Endothelial cell of umbilical vein (primary cell): ENCODE measurements at regions of chr2 and their contacts with region 1.

Region 1: GRCh38 chr2:50143822-50144575 is 887.9 kb downstream of the NRXN1 start:
- DNase-seq: peak; percentile 33
- H3K4me3 ChIP-seq: peak overlapping the region in 1 of 3 experiments; percentile 52
- H3K27ac ChIP-seq: no peak overlapping the region
- H3K4me1 ChIP-seq: no peaks in the 10 kb centered on the region
- H3K27me3 ChIP-seq: no peaks in the 10 kb centered on the region
- CTCF ChIP-seq: peak; percentile 27 to 41
- POLR2A ChIP-seq: no peak

Region 2: GRCh38 chr2:48946449-48947048 is 1197.5 kb before region 1 on chr2:
- CTCF ChIA-PET with region 1: interaction called, 3 read pairs
- POLR2A ChIA-PET with region 1: no interaction called
- dilution Hi-C with region 1: no loop called
- intact Hi-C with region 1: loop called (anchors 1 kb)
- DNase-seq: peak; percentile 56
- H3K4me3 ChIP-seq: no peak overlapping the region
- H3K27ac ChIP-seq: no peak overlapping the region
- H3K4me1 ChIP-seq: no peaks in the 10 kb centered on the region
- H3K27me3 ChIP-seq: no peaks in the 10 kb centered on the region
- CTCF ChIP-seq: peak; percentile 58 to 64
- POLR2A ChIP-seq: no peak

Region 3: GRCh38 chr2:49255409-49255971 is 888.5 kb before region 1 on chr2:
- CTCF ChIA-PET with region 1: no interaction called
- POLR2A ChIA-PET with region 1: no interaction called
- dilution Hi-C with region 1: no loop called
- intact Hi-C with region 1: loop called (anchors 5 kb)
- DNase-seq: peak; percentile 6
- H3K4me3 ChIP-seq: no peak overlapping the region
- H3K27ac ChIP-seq: no peak overlapping the region
- H3K4me1 ChIP-seq: no peaks in the 10 kb centered on the region
- H3K27me3 ChIP-seq: no peaks in the 10 kb centered on the region
- CTCF ChIP-seq: no peak
- POLR2A ChIP-seq: no peak

Region 4: DNA sequence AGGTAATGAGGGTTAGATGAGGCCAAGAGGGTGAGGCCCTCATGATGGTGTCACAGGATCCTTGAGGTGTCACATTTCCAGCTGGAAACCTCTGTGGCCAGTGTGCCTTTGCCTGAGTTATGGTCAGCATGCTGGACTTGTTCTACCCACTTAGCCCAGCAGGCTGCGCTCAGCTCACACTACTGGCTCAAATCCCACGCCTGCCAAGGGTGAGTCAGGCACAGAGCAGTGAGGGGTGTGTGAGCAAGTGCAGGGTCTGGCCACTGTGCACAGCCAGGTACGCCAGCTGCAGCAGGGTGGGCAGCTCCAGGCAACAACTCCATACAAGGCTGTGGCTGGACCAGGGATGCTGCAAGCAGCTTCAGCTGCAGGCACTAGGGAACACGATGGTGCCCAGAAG is 373.1 kb before region 1 on chr2:
- CTCF ChIA-PET with region 1: no interaction called
- POLR2A ChIA-PET with region 1: no interaction called
- dilution Hi-C with region 1: no loop called
- intact Hi-C with region 1: loop called (anchors 10 kb)
- DNase-seq: no peak
- H3K4me3 ChIP-seq: no peak overlapping the region
- H3K27ac ChIP-seq: no peak overlapping the region
- H3K4me1 ChIP-seq: no peaks in the 10 kb centered on the region
- H3K27me3 ChIP-seq: no peaks in the 10 kb centered on the region
- CTCF ChIP-seq: peak in 1 of 2 donors; percentile 15
- POLR2A ChIP-seq: no peak

Region 5: GRCh38 chr2:50126845-50127244 is 17.2 kb before region 1 on chr2:
- CTCF ChIA-PET with region 1: no interaction called
- POLR2A ChIA-PET with region 1: no interaction called
- dilution Hi-C with region 1: no loop called
- intact Hi-C with region 1: no loop called
- DNase-seq: no peak
- H3K4me3 ChIP-seq: no peak overlapping the region
- H3K27ac ChIP-seq: no peak overlapping the region
- H3K4me1 ChIP-seq: no peaks in the 10 kb centered on the region
- H3K27me3 ChIP-seq: no peaks in the 10 kb centered on the region
- CTCF ChIP-seq: no peak
- POLR2A ChIP-seq: no peak

Region 6: DNA sequence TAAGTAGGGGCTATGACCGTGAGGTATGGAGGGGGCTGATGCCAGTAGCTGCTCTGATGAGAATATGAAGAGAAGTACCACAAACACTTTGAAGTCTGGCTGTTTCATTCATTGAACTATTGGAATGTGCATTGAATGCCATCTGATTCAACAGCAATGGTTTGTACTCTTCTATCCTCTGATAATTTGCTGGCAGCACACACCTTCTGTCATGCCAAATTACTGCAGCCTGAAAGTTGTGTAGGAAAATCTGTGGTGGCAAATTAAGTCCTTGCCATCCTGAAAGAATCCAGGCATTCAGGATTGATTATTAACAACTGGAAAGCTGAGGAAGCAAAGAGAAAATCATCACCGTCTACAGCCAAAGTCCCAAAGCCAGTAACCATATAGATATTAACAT is 176.7 kb after region 1 on chr2:
- CTCF ChIA-PET with region 1: no interaction called
- POLR2A ChIA-PET with region 1: no interaction called
- dilution Hi-C with region 1: no loop called
- intact Hi-C with region 1: no loop called
- DNase-seq: no peak
- H3K4me3 ChIP-seq: no peak overlapping the region
- H3K27ac ChIP-seq: no peak overlapping the region
- H3K4me1 ChIP-seq: no peaks in the 10 kb centered on the region
- H3K27me3 ChIP-seq: no peaks in the 10 kb centered on the region
- CTCF ChIP-seq: no peak
- POLR2A ChIP-seq: no peak